ENCODE measurements at regions of chr21 and their contacts with region 1.

Region 1: GRCh38 chr21:46622226-46622625 is 13.2 kb upstream of the PRMT2 start:
- DNase-seq: peak in 9 of 14 experiments; percentile 20 to 90 (median 56)
- ATAC-seq: peak; percentile 70
- H3K4me3 ChIP-seq: no peak overlapping the region
- H3K4me3 Mint-ChIP-seq: peak overlapping the region; percentile 78
- H3K27ac ChIP-seq: peak overlapping the region; percentile 63 to 69
- H3K27ac Mint-ChIP-seq: peak overlapping the region; percentile 94
- H3K4me1 ChIP-seq: peaks cover 69% of the 10 kb centered on the region
- H3K4me1 Mint-ChIP-seq: peaks cover 74% of the 10 kb centered on the region
- H3K27me3 ChIP-seq: no peaks in the 10 kb centered on the region
- H3K27me3 Mint-ChIP-seq: no peaks in the 10 kb centered on the region
- CTCF ChIP-seq: no peak

Region 2: DNA sequence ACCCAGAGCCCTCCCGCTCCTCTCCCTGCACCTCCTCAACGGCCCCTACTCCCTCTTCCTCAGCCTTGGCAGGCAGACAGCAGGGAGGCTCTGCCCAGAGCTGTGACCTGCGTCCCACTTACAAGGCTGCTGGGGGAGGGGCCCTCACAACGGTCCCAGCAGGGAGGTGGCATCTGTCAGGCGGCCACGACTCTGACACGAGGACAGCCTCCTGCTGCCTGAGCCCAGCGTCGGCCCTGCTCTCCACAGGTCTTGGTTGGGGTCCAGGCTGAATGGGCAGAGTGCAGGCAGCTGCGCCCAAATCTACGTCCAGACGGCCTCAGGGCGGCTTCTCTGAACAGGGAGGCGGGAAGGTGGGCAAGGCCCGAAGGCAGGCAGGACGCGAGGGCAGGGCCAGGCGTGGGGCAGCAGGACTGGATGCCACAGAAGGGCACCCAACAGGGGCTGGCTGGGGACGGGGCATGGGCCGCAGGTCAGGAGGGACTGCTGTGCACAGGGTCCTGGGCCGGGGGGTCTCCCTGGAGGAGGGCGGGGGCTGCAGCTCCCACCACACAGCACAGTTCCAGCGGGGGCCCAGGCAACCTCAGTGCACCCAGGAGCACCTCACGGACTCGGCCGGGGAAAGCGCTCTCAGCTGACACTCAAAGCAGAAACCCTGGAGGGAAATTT is 1087.4 kb before region 1 on chr21:
- CTCF ChIA-PET with region 1: no interaction called
- POLR2A ChIA-PET with region 1: no interaction called
- intact Hi-C with region 1: no loop called
- DNase-seq: peak in 1 of 14 experiments; percentile 5
- ATAC-seq: no peak
- H3K4me3 ChIP-seq: no peak overlapping the region
- H3K4me3 Mint-ChIP-seq: no peak overlapping the region
- H3K27ac ChIP-seq: no peak overlapping the region
- H3K27ac Mint-ChIP-seq: peak overlapping the region; percentile 33
- H3K4me1 ChIP-seq: peaks cover 30% of the 10 kb centered on the region
- H3K4me1 Mint-ChIP-seq: peaks cover 12% of the 10 kb centered on the region
- H3K27me3 ChIP-seq: no peaks in the 10 kb centered on the region
- H3K27me3 Mint-ChIP-seq: no peaks in the 10 kb centered on the region
- CTCF ChIP-seq: no peak

Region 3: DNA sequence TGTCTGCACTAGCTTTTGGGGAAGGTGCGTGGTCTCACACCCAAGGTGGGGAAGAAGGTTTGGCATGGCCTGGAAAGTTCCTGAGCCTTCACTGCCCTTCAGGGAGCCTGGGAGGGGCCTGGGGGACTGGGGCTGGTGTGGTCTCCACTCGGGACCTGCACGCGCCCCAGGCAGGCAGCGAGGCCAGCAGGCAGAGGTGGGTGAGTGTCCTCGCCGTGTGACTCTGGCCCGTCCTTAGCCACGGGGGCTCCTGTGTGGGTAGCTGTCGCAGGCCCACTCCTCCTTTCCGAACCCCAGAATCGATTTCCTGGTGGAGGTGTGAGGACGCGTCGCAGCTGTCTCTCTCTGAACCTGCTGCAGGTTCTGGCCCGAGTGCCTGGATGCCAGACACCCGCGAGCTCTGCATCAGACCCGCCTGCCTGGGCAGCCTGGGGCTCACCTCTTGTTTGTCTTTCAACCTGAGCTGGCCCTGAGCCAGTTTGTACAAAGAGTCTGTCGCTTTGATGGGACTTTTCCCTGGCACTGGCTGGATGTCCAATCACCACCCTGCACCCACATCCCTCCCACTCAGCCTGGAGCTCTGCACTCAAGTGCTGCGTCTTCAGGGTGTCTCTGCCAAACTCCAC is 1043.9 kb before region 1 on chr21:
- CTCF ChIA-PET with region 1: no interaction called
- POLR2A ChIA-PET with region 1: no interaction called
- intact Hi-C with region 1: no loop called
- DNase-seq: no peak
- ATAC-seq: no peak
- H3K4me3 ChIP-seq: no peak overlapping the region
- H3K4me3 Mint-ChIP-seq: no peak overlapping the region
- H3K27ac ChIP-seq: no peak overlapping the region
- H3K27ac Mint-ChIP-seq: no peak overlapping the region
- H3K4me1 ChIP-seq: no peaks in the 10 kb centered on the region
- H3K4me1 Mint-ChIP-seq: no peaks in the 10 kb centered on the region
- H3K27me3 ChIP-seq: no peaks in the 10 kb centered on the region
- H3K27me3 Mint-ChIP-seq: no peaks in the 10 kb centered on the region
- CTCF ChIP-seq: no peak

Region 4: DNA sequence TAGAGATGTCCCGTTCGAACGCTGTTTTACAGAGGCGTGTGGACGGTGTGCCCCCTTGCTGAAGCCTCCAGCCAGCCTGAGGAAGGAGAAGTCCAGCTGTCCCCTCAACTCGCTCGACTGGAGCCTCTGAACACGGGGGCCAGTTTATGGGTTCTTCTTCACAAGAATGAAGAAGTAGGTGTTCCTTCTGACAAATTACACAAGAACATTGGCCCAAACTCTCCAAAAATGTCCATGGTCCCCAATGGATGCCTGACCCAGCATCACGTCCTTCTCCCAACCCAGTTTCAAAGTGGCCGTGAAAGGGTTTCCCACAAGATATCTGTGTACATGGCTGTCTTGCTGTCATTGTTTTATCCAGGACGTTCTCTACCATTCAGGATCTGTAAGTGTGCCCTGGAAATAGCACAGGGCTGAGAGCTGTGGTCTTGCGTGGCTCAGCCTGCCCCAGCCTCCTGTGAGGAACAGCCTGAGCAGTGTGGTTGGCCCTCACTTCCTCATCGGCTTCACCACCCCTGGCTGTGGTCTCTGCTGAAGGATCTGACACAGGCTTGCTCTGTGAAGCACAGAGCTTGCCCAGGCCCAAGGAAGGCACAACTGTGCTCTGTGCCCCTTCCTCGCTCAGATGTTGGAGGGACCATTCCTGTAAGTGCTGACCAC is 16.3 kb before region 1 on chr21:
- CTCF ChIA-PET with region 1: no interaction called
- POLR2A ChIA-PET with region 1: interaction called, 15 read pairs
- intact Hi-C with region 1: loop called in 1 of 2 experiments (anchors 2 kb)
- DNase-seq: peak; percentile 13 to 76 (median 45)
- ATAC-seq: peak; percentile 93
- H3K4me3 ChIP-seq: no peak overlapping the region
- H3K4me3 Mint-ChIP-seq: peak overlapping the region; percentile 38
- H3K27ac ChIP-seq: peak overlapping the region in 1 of 2 donors; percentile 11
- H3K27ac Mint-ChIP-seq: peak overlapping the region; percentile 64
- H3K4me1 ChIP-seq: peaks cover 30% of the 10 kb centered on the region
- H3K4me1 Mint-ChIP-seq: peaks cover 57% of the 10 kb centered on the region
- H3K27me3 ChIP-seq: no peaks in the 10 kb centered on the region
- H3K27me3 Mint-ChIP-seq: no peaks in the 10 kb centered on the region
- CTCF ChIP-seq: no peak

Measured in CD4-positive, alpha-beta T cell (primary cell).